Activated CD4-positive, alpha-beta memory T cell treated with anti-CD3 and anti-CD28 coated beads, Interleukin-2, amount 10 ng/mL, durations not matched to agents 7 days and 5 days (primary cell): ENCODE measurements at regions of chr10 and their contacts with region 1.

Region 1: GRCh38 chr10:8053446-8054290 is 820 bp upstream of the GATA3 start:
- DNase-seq: peak; percentile 95
- H3K4me3 Mint-ChIP-seq: peak overlapping the region; percentile 98
- H3K27ac Mint-ChIP-seq: peak overlapping the region; percentile 98
- H3K4me1 Mint-ChIP-seq: peaks cover 36% of the 10 kb centered on the region
- H3K27me3 Mint-ChIP-seq: peaks cover 24% of the 10 kb centered on the region

Region 2: DNA sequence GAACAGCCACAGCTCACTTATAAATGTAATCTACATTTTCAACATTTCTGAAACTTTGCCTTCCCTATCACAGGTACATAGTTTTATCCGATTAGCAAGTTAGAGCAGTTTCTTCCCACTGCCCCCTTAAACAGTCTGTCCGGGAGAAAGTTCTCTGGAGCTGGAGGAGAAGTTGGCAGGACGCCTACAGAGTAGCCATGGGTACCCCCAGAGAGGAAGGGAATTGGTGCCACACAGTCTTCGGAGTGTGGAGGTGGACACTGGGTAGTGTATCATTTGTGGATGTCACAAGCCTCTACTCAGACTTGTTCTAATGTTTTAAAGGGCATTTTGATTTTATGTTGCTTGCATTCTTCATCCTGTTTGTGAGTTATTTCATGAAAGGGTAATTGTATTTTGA is 196.4 kb before region 1 on chr10:
- CTCF ChIA-PET with region 1: no interaction called
- POLR2A ChIA-PET with region 1: no interaction called
- DNase-seq: no peak
- H3K4me3 Mint-ChIP-seq: no peak overlapping the region
- H3K27ac Mint-ChIP-seq: no peak overlapping the region
- H3K4me1 Mint-ChIP-seq: no peaks in the 10 kb centered on the region
- H3K27me3 Mint-ChIP-seq: no peaks in the 10 kb centered on the region

Region 3: GRCh38 chr10:8037941-8038894 is 15.4 kb before region 1 on chr10:
- CTCF ChIA-PET with region 1: interaction called, 4 read pairs
- POLR2A ChIA-PET with region 1: interaction called, 18 read pairs
- DNase-seq: no peak
- H3K4me3 Mint-ChIP-seq: peak overlapping the region; percentile 15
- H3K27ac Mint-ChIP-seq: peak overlapping the region; percentile 15
- H3K4me1 Mint-ChIP-seq: peaks cover 42% of the 10 kb centered on the region
- H3K27me3 Mint-ChIP-seq: peaks cover 85% of the 10 kb centered on the region

Region 4: GRCh38 chr10:8065651-8066050 is 12.0 kb after region 1 on chr10:
- CTCF ChIA-PET with region 1: interaction called, 13 read pairs
- POLR2A ChIA-PET with region 1: interaction called, 100 read pairs
- DNase-seq: no peak
- H3K4me3 Mint-ChIP-seq: peak overlapping the region; percentile 68
- H3K27ac Mint-ChIP-seq: peak overlapping the region; percentile 84
- H3K4me1 Mint-ChIP-seq: peaks cover 96% of the 10 kb centered on the region
- H3K27me3 Mint-ChIP-seq: no peaks in the 10 kb centered on the region